ENCODE measurements at regions of chr7 and their contacts with region 1.

Region 1: DNA sequence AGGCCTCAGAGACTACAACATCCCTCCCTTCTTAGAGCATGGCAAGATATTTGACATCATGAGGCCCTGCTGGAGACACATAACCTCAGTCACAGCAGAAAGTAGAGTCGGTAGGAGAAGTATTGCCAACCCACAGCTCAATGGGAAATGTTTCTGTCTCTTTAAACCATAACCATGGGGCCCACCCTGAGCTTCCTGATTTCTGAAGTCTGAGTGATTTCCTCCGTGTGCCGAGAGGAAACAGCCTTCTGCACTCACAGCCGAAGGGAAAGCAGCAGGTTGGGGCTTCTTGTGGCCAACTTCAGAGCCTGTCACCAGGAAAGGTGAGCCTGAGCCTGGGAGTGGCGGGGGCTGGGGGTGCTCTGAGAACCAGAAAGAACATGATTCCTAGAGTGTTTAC is at the start of gene GIMAP1:
- DNase-seq: peak; percentile 81
- H3K4me3 Mint-ChIP-seq: peak within 1 kb of the TSS; percentile 97
- H3K27ac Mint-ChIP-seq: peak within 1 kb of the TSS; percentile 92
- H3K4me1 Mint-ChIP-seq: peaks cover 62% of the 10 kb centered on the region
- H3K27me3 Mint-ChIP-seq: no peaks in the 10 kb centered on the region
- total RNA-seq, gene GIMAP1: 5.1 to 5.3 TPM

Region 2: DNA sequence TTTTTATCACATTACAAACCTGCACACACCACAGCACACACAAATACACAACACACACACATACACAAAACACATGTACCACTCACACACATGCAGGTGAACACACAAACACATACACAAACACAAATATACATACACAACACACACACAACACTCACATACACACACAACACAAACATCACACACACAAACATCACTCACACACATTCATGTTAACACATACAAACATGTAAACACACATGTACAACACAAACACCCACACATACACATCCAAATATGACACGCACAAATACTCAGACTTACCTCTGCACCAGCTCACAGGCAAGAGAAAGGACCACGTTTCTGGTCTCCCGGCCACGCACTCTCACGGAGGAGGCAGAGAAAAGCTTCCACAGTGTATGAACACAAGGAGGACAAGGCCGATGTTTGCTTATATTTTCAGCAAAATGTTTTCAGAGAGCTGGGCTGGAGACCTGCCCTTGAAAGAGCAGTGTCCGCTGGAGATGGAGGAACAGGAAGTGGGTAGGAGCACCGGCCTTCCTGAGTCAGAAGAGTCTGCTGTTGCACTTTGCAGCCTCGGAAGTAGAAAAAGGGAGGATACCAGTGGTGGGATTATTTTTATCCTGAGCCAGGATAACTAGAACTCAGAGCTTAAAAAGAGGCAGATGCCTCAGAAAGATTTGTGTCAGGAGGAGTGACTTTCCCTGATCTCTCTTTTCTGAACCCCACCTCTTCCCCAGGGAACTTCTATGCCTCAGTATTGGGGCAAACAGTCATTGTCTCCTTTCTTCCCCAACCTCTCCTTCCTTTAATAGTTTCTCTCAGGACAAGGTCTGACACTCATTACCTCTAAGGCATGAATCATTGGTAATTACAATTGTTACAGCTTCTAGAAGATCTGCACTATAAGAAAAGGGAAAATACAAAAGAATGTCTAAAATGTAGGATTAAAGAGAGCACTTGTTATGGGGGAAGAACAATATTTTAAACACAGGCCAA is 84.2 kb before region 1 on chr7 and contains the start of gene GIMAP6:
- CTCF ChIA-PET with region 1: interaction called, 3 read pairs
- intact Hi-C with region 1: loop called (anchors 5 kb)
- DNase-seq: peak; percentile 64
- H3K4me3 Mint-ChIP-seq: peak within 1 kb of the TSS; percentile 85
- H3K27ac Mint-ChIP-seq: peak within 1 kb of the TSS; percentile 92
- H3K4me1 Mint-ChIP-seq: peaks cover 67% of the 10 kb centered on the region
- H3K27me3 Mint-ChIP-seq: no peaks in the 10 kb centered on the region
- total RNA-seq, gene GIMAP6: 19.2 to 20.7 TPM

Region 3: GRCh38 chr7:150685219-150686029 is 30.9 kb before region 1 on chr7 and contains the start of gene GIMAP2:
- CTCF ChIA-PET with region 1: interaction called, 7 read pairs
- intact Hi-C with region 1: loop called (anchors 1 kb)
- DNase-seq: peak; percentile 56
- H3K4me3 Mint-ChIP-seq: peak within 1 kb of the TSS; percentile 93
- H3K27ac Mint-ChIP-seq: peak within 1 kb of the TSS; percentile 98
- H3K4me1 Mint-ChIP-seq: peaks cover 73% of the 10 kb centered on the region
- H3K27me3 Mint-ChIP-seq: no peaks in the 10 kb centered on the region
- total RNA-seq, gene GIMAP2: 45.0 to 49.5 TPM

Region 4: GRCh38 chr7:150703209-150703608 is 13.2 kb before region 1 on chr7:
- CTCF ChIA-PET with region 1: interaction called, 10 read pairs
- intact Hi-C with region 1: no loop called
- DNase-seq: no peak
- H3K4me3 Mint-ChIP-seq: no peak overlapping the region
- H3K27ac Mint-ChIP-seq: no peak overlapping the region
- H3K4me1 Mint-ChIP-seq: peaks cover 5% of the 10 kb centered on the region
- H3K27me3 Mint-ChIP-seq: no peaks in the 10 kb centered on the region

Region 5: GRCh38 chr7:150728609-150729008 is 12.2 kb after region 1 on chr7:
- CTCF ChIA-PET with region 1: interaction called, 25 read pairs
- intact Hi-C with region 1: loop called (anchors 1 kb)
- DNase-seq: no peak
- H3K4me3 Mint-ChIP-seq: no peak overlapping the region
- H3K27ac Mint-ChIP-seq: peak overlapping the region; percentile 43
- H3K4me1 Mint-ChIP-seq: peaks cover 67% of the 10 kb centered on the region
- H3K27me3 Mint-ChIP-seq: no peaks in the 10 kb centered on the region

Region 6: DNA sequence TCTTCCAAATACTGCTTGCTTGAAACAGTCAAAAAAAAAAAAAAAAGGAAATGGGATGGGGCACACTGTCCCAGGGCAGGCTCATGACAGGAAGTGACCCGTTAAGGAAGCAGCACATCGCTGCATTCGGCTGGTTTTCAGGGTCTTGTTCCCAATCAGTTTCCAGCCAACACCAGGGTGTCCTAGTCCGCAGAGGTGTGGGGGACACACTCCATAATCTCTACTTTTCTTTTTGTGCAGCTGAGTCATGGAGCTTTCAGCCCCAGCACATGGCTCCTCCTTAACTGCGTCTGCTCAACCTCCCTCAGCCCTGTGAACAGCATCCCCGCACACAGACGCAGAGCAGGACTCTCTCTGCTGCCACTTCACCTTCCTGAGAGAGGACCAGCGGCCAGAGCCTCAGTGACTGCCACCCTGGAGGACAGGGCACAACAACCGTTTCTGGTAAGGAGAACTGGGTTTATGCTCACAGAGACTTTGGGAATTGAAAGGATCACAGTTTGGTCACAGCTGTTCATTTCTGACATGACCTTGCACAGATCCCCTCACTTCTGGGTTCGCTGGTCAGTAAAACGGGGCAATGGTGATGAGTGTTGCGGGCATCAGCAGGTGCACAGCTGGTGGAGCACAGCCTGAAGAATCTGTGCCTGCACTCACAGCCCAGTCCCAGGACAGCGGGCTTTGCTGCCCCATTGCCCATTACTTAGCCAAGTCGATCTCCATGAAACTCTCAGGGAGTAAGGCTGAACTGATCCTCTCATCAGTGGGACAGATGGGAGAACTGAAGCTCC is 21.1 kb after region 1 on chr7 and contains the start of gene GIMAP5:
- CTCF ChIA-PET with region 1: interaction called, 25 read pairs
- intact Hi-C with region 1: loop called (anchors 1 kb)
- DNase-seq: peak; percentile 66
- H3K4me3 Mint-ChIP-seq: peak within 1 kb of the TSS; percentile 88
- H3K27ac Mint-ChIP-seq: peak within 1 kb of the TSS; percentile 95
- H3K4me1 Mint-ChIP-seq: peaks cover 72% of the 10 kb centered on the region
- H3K27me3 Mint-ChIP-seq: no peaks in the 10 kb centered on the region
- total RNA-seq, gene GIMAP5: 32.1 to 32.3 TPM